HCT116 (cell line): ENCODE measurements at regions of chr20 and their contacts with region 1.

Region 1: DNA sequence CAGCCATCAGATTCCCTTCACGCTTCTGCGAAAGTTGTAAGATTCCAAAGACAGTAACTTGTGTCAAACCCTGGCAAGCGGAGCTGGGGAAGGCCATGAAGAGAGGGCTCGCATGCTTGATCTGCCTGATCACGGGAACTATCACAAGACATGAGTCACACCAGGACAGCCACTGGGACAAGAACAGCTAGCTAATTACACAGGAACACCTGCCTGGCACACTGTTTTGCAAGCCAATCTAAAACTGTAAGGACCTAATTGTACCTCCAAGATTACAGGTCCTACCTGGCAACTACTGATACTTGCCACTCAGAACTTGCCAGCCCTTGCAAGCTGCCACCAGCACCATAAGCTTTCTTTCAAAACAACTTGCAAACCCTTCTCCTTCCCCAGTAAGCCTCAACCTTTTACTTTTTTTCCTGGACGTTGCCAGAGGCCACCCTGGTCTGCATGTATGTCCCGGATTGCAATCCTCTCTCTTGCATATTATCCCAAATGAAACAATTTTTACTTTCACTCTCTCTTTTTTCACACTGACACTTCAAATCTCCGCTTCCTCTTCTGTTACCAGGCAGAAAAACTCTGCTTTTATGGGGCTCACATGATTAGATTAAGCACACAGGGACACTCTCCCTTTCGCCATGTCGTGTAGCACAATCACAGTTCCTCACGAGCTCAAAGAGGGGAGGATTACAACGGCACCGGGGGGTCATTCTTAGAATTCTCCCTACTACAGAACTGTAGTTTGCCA is 289.1 kb downstream of the KIF16B start:
- DNase-seq: no peak
- ATAC-seq: no peak
- H3K4me3 ChIP-seq: no peak overlapping the region
- H3K27ac ChIP-seq: no peak overlapping the region
- H3K4me1 ChIP-seq: no peaks in the 10 kb centered on the region
- H3K27me3 ChIP-seq: no peaks in the 10 kb centered on the region
- CTCF ChIP-seq: no peak
- POLR2A ChIP-seq: no peak
- RAD21 ChIP-seq: no peak

Region 2: DNA sequence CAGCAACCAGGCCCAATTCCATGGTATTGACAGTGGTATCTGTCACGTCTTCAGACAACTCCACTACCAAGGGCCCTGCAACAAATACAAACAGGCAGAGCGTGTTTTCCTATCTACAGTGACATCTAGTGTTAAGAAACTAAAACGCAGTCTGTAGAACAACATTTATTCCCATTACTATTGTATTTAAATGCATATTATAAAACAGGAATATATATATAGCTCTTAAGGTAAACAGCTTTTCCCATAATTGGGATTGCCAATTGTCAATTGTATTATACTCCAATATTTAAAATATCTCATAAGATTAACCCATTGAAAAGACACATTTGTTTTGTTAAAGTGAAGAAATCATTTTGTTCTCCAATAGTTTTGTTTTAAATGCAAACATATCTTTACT is 191.9 kb after region 1 on chr20:
- CTCF ChIA-PET with region 1: no interaction called
- POLR2A ChIA-PET with region 1: no interaction called
- RAD21 ChIA-PET with region 1: no interaction called
- intact Hi-C with region 1: loop called (anchors 10 kb)
- DNase-seq: peak; percentile 24
- ATAC-seq: peak; percentile 76
- H3K4me3 ChIP-seq: no peak overlapping the region
- H3K27ac ChIP-seq: no peak overlapping the region
- H3K4me1 ChIP-seq: no peaks in the 10 kb centered on the region
- H3K27me3 ChIP-seq: no peaks in the 10 kb centered on the region
- CTCF ChIP-seq: peak; percentile 28 to 65 (median 47); a peak in 5 of 6 replicates
- POLR2A ChIP-seq: no peak
- RAD21 ChIP-seq: peak; percentile 61